Activated CD4-positive, alpha-beta T cell treated with anti-CD3 and anti-CD28 coated beads, Interleukin-2, amount 10 ng/mL, durations not matched to agents 24 days and 14 days (primary cell): ENCODE measurements at regions of chr15 and their contacts with region 1.

Region 1: DNA sequence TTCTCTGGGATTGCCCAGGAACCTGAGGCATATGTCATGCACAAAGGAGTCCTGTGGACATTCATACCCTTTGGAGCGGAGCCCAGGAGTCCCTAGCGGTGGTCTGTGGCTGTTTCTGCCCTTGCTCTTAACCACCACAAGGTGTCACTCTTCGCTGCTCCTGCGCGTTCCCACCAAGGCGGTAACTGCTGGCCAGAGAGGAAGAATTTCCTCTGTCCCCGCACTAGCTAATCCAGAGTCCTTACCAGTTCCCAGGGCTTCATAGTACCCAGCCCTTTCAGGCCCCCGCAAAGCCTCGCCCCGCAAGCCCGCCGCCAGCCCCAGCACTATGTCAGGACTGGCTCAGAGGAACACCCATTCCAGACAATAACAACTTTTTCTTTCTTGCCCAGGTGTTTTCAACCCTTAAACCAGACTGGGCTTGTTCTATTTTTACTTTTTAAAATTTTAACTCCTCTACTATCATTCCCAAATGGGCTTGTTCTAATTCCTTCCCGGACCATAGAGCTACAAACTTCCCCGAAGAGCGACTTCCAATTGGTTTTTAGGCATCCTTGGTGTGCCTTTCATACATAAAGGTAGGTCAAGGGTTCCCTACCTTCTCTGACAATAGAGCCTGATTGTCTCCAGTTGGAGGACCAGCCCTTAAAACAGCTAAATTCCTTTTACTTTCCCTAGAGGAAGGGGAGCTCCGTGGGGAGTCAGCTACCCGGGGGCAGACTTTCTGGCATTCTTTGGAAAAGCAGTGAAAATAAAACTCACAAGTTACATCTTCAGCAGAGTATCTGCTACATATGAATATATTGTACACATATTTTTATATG is 31.8 kb upstream of the ZNF774 start:
- DNase-seq: peak; percentile 91
- H3K4me3 Mint-ChIP-seq: peak overlapping the region; percentile 54
- H3K27ac Mint-ChIP-seq: no peak overlapping the region
- H3K4me1 Mint-ChIP-seq: peaks cover 8% of the 10 kb centered on the region
- H3K27me3 Mint-ChIP-seq: no peaks in the 10 kb centered on the region

Region 2: GRCh38 chr15:90482124-90483011 is 162.1 kb after region 1 on chr15:
- intact Hi-C with region 1: loop called (anchors 1 kb)
- DNase-seq: peak; percentile 84
- H3K4me3 Mint-ChIP-seq: no peak overlapping the region
- H3K27ac Mint-ChIP-seq: peak overlapping the region; percentile 13
- H3K4me1 Mint-ChIP-seq: peaks cover 33% of the 10 kb centered on the region
- H3K27me3 Mint-ChIP-seq: no peaks in the 10 kb centered on the region

Region 3: DNA sequence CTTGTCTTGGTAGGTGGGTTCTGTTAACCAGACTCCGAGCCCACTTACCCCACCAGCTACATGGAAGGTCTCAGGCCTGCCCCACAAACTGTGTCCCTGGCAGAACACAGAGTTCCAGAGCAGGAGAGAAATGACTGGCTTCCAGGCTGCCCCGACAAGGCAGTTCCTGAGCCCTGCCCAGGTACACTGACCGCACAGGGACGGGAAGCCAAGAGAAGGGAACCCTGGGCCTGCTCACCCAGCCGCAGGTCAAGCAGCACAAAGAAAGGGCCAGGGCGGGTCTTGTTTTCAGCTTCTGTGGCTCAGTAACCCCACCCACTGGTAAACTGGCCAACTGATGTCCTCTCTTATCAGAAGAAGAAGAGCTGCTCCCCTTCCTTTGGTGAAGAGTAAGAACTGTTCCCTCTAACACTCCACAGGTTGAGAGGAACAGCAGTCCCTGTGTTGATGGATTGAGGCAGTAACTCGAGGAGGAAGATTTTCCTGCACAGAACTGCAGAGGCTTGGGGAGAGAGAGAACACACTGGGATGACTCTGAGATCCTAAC is 277.8 kb after region 1 on chr15:
- intact Hi-C with region 1: loop called (anchors 10 kb)
- DNase-seq: peak; percentile 76
- H3K4me3 Mint-ChIP-seq: peak overlapping the region; percentile 53
- H3K27ac Mint-ChIP-seq: peak overlapping the region; percentile 89
- H3K4me1 Mint-ChIP-seq: peaks cover 67% of the 10 kb centered on the region
- H3K27me3 Mint-ChIP-seq: no peaks in the 10 kb centered on the region